Activated CD4-positive, alpha-beta T cell treated with anti-CD3 and anti-CD28 coated beads, Interleukin-2, amount 10 ng/mL, durations not matched to agents 24 days and 14 days (primary cell): ENCODE measurements at regions of chr18 and their contacts with region 1.

Region 1: GRCh38 chr18:50853863-50854271 is 25.1 kb upstream of the ME2 start:
- DNase-seq: no peak
- H3K4me3 Mint-ChIP-seq: no peak overlapping the region
- H3K27ac Mint-ChIP-seq: no peak overlapping the region
- H3K4me1 Mint-ChIP-seq: no peaks in the 10 kb centered on the region
- H3K27me3 Mint-ChIP-seq: peaks cover 15% of the 10 kb centered on the region

Region 2: GRCh38 chr18:50797142-50797541 is 56.7 kb before region 1 on chr18:
- intact Hi-C with region 1: loop called (anchors 10 kb)
- DNase-seq: no peak
- H3K4me3 Mint-ChIP-seq: no peak overlapping the region
- H3K27ac Mint-ChIP-seq: no peak overlapping the region
- H3K4me1 Mint-ChIP-seq: no peaks in the 10 kb centered on the region
- H3K27me3 Mint-ChIP-seq: peaks cover 16% of the 10 kb centered on the region

Region 3: GRCh38 chr18:50879302-50880118 is 25.6 kb after region 1 on chr18:
- intact Hi-C with region 1: no loop called
- DNase-seq: peak; percentile 80
- H3K4me3 Mint-ChIP-seq: peak overlapping the region; percentile 95
- H3K27ac Mint-ChIP-seq: peak overlapping the region; percentile 99
- H3K4me1 Mint-ChIP-seq: peaks cover 27% of the 10 kb centered on the region
- H3K27me3 Mint-ChIP-seq: no peaks in the 10 kb centered on the region

Region 4: GRCh38 chr18:51316677-51317076 is 462.8 kb after region 1 on chr18:
- intact Hi-C with region 1: no loop called
- DNase-seq: no peak
- H3K4me3 Mint-ChIP-seq: no peak overlapping the region
- H3K27ac Mint-ChIP-seq: no peak overlapping the region
- H3K4me1 Mint-ChIP-seq: no peaks in the 10 kb centered on the region
- H3K27me3 Mint-ChIP-seq: peaks cover 2% of the 10 kb centered on the region

Region 5: GRCh38 chr18:52054324-52054723 is 1200.5 kb after region 1 on chr18:
- intact Hi-C with region 1: no loop called
- DNase-seq: no peak
- H3K4me3 Mint-ChIP-seq: no peak overlapping the region
- H3K27ac Mint-ChIP-seq: no peak overlapping the region
- H3K4me1 Mint-ChIP-seq: no peaks in the 10 kb centered on the region
- H3K27me3 Mint-ChIP-seq: no peaks in the 10 kb centered on the region